ENCODE measurements at regions of chr19 and their contacts with region 1.

Region 1: DNA sequence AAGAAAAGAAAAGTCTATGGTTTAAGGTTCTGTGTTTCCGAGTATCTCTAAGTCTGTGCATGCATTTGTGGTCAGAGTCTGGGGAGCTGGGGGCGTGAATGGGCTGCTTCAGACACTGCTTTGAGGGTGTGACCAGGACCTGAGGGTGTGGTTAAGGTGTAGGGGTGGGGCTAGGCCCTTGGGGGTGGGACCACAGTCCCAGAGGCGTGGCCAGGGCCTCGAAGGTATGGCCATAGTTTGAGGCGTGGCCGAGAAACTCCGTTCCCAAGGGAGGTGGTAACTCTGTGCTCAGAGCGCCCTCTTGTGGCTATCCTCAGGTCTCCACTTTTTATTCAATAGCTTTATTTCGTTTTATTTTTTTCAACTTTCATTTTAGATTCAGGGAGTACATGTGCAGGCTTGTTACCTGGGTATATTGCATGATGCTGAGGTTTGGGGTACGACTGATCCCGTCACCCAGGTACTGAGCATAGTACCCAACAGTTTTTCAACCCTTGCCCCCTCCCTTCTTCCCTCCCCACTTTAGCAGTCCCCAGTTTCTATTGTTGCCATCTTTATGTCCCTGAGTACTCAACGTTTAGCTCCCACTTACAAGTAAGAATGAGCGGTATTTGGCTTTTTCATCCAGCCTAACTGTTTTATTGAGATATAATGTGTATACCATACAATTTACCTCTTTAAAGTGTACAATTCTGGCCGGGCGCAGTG is 7.0 kb upstream of the CBLC start:
- DNase-seq: peak; percentile 99
- ATAC-seq: peak; percentile 96 to 99
- H3K4me3 ChIP-seq: no peak overlapping the region
- H3K27ac ChIP-seq: peak overlapping the region; percentile 74 to 88
- H3K4me1 ChIP-seq: peaks cover 47% of the 10 kb centered on the region
- CTCF ChIP-seq: peak; percentile 99
- EP300 ChIP-seq: no peak; a peak in 1 of 5 replicates
- POLR2A ChIP-seq: no peak
- RAD21 ChIP-seq: peak; percentile 100

Region 2: DNA sequence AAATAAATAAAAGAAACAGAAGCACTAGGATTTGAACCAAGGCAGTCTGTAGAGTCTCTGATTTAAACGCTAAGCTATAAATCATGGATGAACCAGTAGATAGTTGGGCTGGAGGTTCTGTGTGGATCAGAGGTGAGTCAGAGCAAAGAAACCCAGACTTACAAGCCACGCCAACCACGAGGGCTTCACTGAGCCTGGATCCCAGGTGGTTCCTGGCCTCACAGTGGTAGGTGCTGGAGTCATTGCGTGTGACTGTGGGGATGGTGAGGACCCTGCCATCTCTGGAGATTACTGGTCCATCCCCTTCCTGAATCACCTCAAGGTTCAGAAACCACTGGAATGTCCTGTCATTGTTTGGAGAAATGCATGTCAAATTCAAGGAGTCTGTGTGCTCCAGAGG is 222.0 kb before region 1 on chr19:
- CTCF ChIA-PET with region 1: no interaction called
- POLR2A ChIA-PET with region 1: no interaction called
- DNase-seq: no peak
- ATAC-seq: peak; percentile 26 to 40; a peak in 2 of 6 replicates
- H3K4me3 ChIP-seq: no peak overlapping the region
- H3K27ac ChIP-seq: no peak overlapping the region
- H3K4me1 ChIP-seq: no peaks in the 10 kb centered on the region
- CTCF ChIP-seq: no peak
- EP300 ChIP-seq: no peak
- POLR2A ChIP-seq: no peak
- RAD21 ChIP-seq: no peak

Region 3: GRCh38 chr19:44570984-44571684 is 199.6 kb before region 1 on chr19:
- CTCF ChIA-PET with region 1: interaction called, 14 read pairs
- POLR2A ChIA-PET with region 1: interaction called, 3 read pairs
- DNase-seq: peak; percentile 82 to 86
- ATAC-seq: peak; percentile 87 to 95
- H3K4me3 ChIP-seq: no peak overlapping the region
- H3K27ac ChIP-seq: peak overlapping the region in 1 of 2 experiments; percentile 57; a peak in 2 of 6 replicates
- H3K4me1 ChIP-seq: peaks cover 8% of the 10 kb centered on the region
- CTCF ChIP-seq: peak; percentile 98
- EP300 ChIP-seq: no peak
- POLR2A ChIP-seq: no peak
- RAD21 ChIP-seq: peak; percentile 95 to 96

Region 4: DNA sequence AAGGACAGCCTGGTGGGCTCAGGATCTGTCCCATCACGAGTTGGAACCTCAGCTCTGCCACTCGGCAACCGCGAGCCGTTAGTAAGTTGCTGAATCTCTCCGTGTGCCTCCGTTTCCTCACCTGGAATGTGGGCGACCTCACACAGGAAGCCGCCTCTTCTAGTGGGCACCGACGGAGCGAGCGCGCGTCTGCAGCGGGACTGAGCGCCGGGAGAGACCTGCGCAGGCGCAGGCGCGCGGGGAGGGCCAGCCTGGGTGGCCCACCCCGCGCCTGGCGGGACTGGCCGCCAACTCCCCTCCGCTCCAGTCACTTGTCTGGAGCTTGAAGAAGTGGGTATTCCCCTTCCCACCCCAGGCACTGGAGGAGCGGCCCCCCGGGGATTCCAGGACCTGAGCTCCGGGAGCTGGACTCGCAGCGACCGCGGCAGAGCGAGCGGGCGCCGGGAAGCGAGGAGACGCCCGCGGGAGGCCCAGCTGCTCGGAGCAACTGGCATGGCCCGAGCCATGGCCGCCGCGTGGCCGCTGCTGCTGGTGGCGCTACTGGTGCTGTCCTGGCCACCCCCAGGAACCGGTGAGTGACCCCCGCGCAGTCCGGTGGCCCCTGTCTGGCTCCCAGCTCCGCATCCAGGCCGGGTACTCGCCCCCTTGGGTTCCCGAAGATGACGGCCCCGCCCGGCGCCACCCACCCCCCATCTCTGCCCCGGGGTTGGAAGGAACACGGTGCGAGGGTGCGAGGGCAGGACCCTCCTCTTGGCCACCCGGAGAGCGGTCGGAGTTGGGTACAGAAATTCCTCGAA is 126.9 kb before region 1 on chr19 and contains the start of gene PVR:
- CTCF ChIA-PET with region 1: interaction called, 18 read pairs
- POLR2A ChIA-PET with region 1: no interaction called
- DNase-seq: peak; percentile 91 to 98
- ATAC-seq: peak; percentile 86 to 90
- H3K4me3 ChIP-seq: peak within 1 kb of the TSS; percentile 61
- H3K27ac ChIP-seq: peak within 1 kb of the TSS; percentile 91 to 97
- H3K4me1 ChIP-seq: peaks cover 75% of the 10 kb centered on the region
- CTCF ChIP-seq: no peak
- EP300 ChIP-seq: peak in 1 of 2 experiments; percentile 51; a peak in 1 of 5 replicates
- POLR2A ChIP-seq: peak; percentile 72
- RAD21 ChIP-seq: no peak; a peak in 1 of 5 replicates
- polyA plus RNA-seq, gene PVR: 108 and 110 TPM in 2 replicates

Region 5: GRCh38 chr19:44683417-44684210 is 87.1 kb before region 1 on chr19:
- CTCF ChIA-PET with region 1: interaction called, 320 read pairs
- POLR2A ChIA-PET with region 1: interaction called, 8 read pairs
- DNase-seq: no peak
- ATAC-seq: peak; percentile 8 to 9; a peak in 4 of 6 replicates
- H3K4me3 ChIP-seq: no peak overlapping the region
- H3K27ac ChIP-seq: peak overlapping the region; percentile 87 to 92
- H3K4me1 ChIP-seq: peaks cover 65% of the 10 kb centered on the region
- CTCF ChIP-seq: no peak
- EP300 ChIP-seq: no peak
- POLR2A ChIP-seq: no peak
- RAD21 ChIP-seq: peak in 1 of 2 experiments; percentile 29; a peak in 1 of 5 replicates

Region 6: DNA sequence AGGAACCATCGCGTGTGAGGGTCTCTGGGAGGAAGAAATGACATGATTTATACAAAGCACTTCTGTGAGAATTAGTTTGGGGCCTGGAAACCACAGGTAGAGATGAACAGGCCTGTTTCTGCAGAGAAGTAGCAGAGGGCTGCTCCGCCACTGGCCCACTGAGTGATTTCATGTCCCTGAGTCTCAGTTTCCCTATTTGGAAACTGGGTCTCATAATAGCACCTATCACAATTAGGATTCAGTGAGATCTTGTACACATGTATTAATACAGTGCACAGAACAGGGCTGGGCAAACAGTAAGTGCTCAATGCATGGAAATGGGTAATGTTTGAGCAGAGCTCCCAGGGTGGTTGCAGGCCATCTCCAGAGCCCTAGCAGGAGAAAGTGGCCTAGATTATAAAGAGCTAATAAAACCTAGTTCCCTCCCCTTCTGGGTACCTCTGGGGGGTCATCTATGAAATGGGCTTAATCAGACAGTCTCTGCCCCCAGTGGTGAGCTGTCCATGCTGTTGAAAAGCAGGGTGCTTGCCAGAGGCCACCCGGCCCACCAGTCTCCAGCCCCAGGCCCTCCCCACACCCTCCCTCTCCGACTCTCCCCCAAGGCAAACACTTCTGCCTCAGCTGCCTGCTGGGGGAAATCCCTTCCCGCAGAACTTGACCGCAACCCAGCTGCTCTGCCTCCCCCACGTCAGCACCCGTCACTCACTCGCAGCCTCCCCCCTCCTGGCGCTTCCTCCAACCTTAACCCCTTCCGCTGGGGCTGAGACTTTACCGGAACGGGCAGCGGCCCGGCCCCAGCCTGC is 17.7 kb before region 1 on chr19:
- CTCF ChIA-PET with region 1: interaction called, 175 read pairs
- POLR2A ChIA-PET with region 1: interaction called, 5 read pairs
- DNase-seq: peak; percentile 93 to 97
- ATAC-seq: peak; percentile 52 to 61
- H3K4me3 ChIP-seq: peak overlapping the region; percentile 95
- H3K27ac ChIP-seq: peak overlapping the region; percentile 92 to 99
- H3K4me1 ChIP-seq: peaks cover 83% of the 10 kb centered on the region
- CTCF ChIP-seq: no peak
- EP300 ChIP-seq: peak; percentile 78 to 92; a peak in 4 of 5 replicates
- POLR2A ChIP-seq: no peak
- RAD21 ChIP-seq: no peak; a peak in 2 of 5 replicates

Region 7: DNA sequence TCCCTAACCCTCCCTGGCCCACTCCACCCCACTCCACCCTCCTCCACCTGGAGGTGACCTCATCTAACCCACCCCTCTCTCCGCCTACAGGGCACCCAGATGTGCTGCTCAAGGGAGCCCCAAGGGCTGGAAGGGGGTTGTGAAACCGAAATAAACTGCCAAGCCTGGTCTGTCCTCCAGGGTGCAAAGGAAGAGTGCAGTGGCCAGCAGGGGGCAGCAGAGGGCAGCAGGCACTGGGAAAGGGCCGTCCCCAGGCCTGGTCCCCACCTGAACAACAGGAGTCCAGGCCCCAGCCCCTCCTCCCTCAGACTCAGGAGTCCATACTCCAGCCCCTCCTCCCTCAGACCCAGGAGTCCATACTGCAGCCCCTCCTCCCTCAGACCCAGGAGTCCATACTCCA is 29.8 kb after region 1 on chr19:
- CTCF ChIA-PET with region 1: interaction called, 38 read pairs
- POLR2A ChIA-PET with region 1: no interaction called
- DNase-seq: peak; percentile 89 to 97
- ATAC-seq: peak; percentile 95 to 98
- H3K4me3 ChIP-seq: no peak overlapping the region
- H3K27ac ChIP-seq: peak overlapping the region; percentile 62 to 79; a peak in 5 of 6 replicates
- H3K4me1 ChIP-seq: peaks cover 19% of the 10 kb centered on the region
- CTCF ChIP-seq: peak; percentile 92
- EP300 ChIP-seq: no peak
- POLR2A ChIP-seq: no peak
- RAD21 ChIP-seq: peak; percentile 81 to 86

Region 8: DNA sequence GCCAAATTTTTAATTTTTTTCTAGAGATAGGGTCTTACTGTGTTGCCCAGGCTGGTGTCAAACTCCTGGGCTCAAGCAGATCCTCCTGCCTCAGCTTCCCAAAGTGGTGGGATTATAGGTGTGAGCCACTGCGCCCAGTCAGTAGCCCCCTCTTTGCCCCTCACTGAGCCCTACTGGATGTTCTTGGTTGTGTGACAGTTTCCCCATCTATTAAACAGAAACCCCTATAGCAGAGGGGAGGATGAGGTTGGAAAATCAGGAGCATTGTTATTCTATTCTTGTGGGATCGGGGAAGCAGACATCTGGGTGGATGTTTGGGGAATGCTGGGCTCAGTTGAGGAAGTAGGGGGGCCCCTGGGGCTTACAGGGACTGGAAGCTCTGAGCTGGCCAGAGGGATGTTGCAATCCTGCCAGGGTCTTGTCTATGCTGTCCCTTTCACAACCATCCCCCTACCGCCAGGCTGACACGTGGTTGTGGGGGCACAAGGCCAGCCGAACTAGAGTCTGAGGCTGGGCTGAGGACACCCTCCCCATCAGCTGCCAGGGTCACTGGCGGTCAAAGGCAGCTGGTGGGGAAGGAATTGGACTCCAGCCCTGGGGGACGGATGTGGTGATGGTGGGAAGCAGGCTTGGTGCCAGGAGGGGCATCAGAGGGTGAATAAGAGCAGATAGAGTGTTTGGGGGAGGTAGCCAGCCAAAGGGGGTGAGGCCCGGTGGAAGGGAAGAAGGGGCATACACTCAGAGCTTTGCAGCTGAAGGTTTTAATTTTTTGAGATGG is 154.6 kb after region 1 on chr19:
- CTCF ChIA-PET with region 1: no interaction called
- POLR2A ChIA-PET with region 1: no interaction called
- DNase-seq: no peak
- ATAC-seq: no peak
- H3K4me3 ChIP-seq: no peak overlapping the region
- H3K27ac ChIP-seq: no peak overlapping the region
- H3K4me1 ChIP-seq: peaks cover 15% of the 10 kb centered on the region; the same call in 2 of the 3 replicates
- CTCF ChIP-seq: no peak
- EP300 ChIP-seq: no peak
- POLR2A ChIP-seq: no peak
- RAD21 ChIP-seq: no peak

Region 9: DNA sequence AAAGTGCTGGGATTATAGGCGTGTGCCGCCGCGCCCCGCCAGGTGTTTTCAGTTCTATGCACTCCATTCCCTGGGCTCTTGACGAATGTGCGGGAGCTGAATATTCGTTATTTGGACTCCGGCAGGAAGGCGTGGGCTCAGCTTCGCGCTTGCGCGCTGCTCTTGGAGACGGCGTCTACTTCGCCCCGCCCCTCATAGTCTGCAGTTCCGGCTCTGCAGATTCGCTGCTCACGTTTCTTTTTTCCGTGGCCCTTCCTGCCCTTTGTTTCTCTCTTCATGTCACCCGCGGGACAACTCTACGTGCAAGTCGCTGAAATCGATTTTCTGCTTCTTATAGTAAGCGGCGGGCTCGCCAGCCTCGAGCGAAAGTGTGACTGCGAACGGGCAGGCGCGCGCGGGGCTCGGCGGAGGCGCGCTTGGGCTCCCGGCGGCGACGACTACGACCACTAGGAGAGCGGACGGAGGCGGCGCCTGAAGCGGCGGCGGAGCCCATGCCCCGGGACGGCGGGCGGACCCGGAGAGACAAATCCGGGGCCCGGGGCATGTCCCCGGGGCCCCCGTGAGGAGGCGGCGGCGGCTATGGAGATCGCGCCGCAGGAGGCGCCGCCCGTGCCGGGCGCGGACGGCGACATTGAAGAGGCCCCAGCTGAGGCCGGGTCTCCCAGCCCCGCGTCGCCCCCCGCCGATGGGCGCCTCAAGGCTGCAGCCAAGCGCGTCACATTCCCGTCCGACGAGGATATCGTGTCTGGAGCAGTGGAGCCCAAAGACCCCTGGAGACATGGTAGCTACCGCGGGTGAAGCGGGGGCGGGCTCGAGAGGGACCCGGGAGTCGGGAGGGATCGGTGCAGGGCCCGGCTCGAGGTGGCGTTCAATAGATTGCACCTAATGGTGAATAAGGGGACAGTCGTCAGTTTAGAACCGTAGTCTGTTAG is 322.3 kb after region 1 on chr19 and contains the start of gene PPP1R37:
- CTCF ChIA-PET with region 1: no interaction called
- POLR2A ChIA-PET with region 1: no interaction called
- DNase-seq: peak; percentile 99 to 100
- ATAC-seq: peak; percentile 78 to 84
- H3K4me3 ChIP-seq: peak within 1 kb of the TSS; percentile 86
- H3K27ac ChIP-seq: peak within 1 kb of the TSS; percentile 92 to 94
- H3K4me1 ChIP-seq: peaks cover 46% of the 10 kb centered on the region
- CTCF ChIP-seq: peak; percentile 18; the same call in 2 of the 3 replicates
- EP300 ChIP-seq: no peak
- POLR2A ChIP-seq: peak; percentile 35
- RAD21 ChIP-seq: 0 out of 5 replicates have a peak, but pooled peaks of 1 of the 2 experiments have one; percentile 10
- polyA plus RNA-seq, gene PPP1R37: 7.6 and 9.1 TPM in 2 replicates

Measured in A549 (cell line).